ENCODE measurements at regions of chr1 and their contacts with region 1.

Region 1: GRCh38 chr1:89987170-89987819 is 7.6 kb upstream of the ZNF326 start:
- DNase-seq: peak in 8 of 9 experiments; percentile 16 to 81 (median 52)
- ATAC-seq: peak; percentile 95
- H3K4me3 ChIP-seq: no peak overlapping the region
- H3K4me3 Mint-ChIP-seq: no peak overlapping the region
- H3K27ac ChIP-seq: no peak overlapping the region
- H3K27ac Mint-ChIP-seq: no peak overlapping the region
- H3K4me1 ChIP-seq: no peaks in the 10 kb centered on the region
- H3K4me1 Mint-ChIP-seq: no peaks in the 10 kb centered on the region
- H3K27me3 ChIP-seq: no peaks in the 10 kb centered on the region
- H3K27me3 Mint-ChIP-seq: no peaks in the 10 kb centered on the region
- CTCF ChIP-seq: peak; percentile 84

Region 2: DNA sequence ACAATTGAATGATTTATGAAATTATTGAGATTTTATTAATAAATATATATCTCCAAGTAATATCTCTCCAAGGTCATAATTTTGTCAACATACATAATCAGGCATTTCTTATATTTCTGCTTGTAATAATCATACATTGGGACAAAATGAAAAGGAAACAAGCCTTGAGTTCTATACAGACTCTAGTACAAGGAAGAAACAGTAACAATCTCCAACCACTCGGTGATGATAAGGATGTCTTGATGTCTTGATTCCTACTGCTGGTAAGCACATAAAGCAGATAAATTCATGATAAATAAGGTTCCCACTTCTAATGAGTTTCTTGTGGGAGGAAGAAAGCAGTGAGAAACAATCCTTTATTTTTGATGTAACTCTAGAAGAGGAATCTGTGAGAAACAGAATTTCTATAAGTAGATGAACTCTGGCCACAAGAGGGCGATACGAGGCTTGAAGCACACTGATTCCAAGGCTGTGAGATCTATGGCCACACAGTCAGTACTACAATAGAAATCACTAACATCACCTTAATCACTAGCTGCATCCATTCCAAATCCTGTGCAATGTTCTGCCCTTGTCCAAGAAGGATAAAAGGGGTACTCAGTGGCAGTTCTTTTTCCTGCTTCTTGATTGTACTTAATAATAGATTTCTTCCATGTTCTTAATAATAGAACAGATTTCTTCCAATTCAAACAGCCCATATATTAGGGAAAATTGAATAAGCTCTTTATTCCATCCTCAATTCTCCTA is 504.1 kb before region 1 on chr1:
- CTCF ChIA-PET with region 1: interaction called, 5 read pairs
- POLR2A ChIA-PET with region 1: no interaction called
- intact Hi-C with region 1: loop called (anchors 1 to 2 kb)
- DNase-seq: peak; percentile 48 to 85 (median 79)
- ATAC-seq: peak; percentile 92
- H3K4me3 ChIP-seq: no peak overlapping the region
- H3K4me3 Mint-ChIP-seq: no peak overlapping the region
- H3K27ac ChIP-seq: no peak overlapping the region
- H3K27ac Mint-ChIP-seq: no peak overlapping the region
- H3K4me1 ChIP-seq: no peaks in the 10 kb centered on the region
- H3K4me1 Mint-ChIP-seq: peaks cover 9% of the 10 kb centered on the region
- H3K27me3 ChIP-seq: no peaks in the 10 kb centered on the region
- H3K27me3 Mint-ChIP-seq: peaks cover 4% of the 10 kb centered on the region
- CTCF ChIP-seq: peak; percentile 72

Region 3: DNA sequence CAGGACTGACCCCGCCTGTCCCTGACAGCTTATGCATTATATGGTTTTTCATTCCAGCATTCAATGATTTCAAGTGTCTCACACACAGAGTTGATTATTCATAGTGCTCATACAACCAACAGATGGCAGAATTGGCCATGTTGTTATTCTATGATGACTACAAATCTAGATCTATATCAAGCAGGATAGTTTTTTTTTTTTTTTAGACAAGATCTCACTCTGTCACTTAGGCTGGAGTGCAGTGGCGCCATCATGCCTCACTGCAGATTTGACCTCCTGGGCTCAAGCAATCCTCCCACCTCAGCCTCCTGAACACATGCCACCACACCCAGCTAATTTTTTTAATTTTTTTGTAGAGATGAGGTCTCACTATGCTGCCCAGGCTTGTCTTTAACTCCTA is 206.6 kb before region 1 on chr1:
- CTCF ChIA-PET with region 1: interaction called, 33 read pairs
- POLR2A ChIA-PET with region 1: no interaction called
- intact Hi-C with region 1: loop called (anchors 1 kb)
- DNase-seq: peak in 2 of 9 experiments; percentile 51 to 71
- ATAC-seq: peak; percentile 75
- H3K4me3 ChIP-seq: no peak overlapping the region
- H3K4me3 Mint-ChIP-seq: no peak overlapping the region
- H3K27ac ChIP-seq: no peak overlapping the region
- H3K27ac Mint-ChIP-seq: no peak overlapping the region
- H3K4me1 ChIP-seq: peaks cover 16% of the 10 kb centered on the region
- H3K4me1 Mint-ChIP-seq: peaks cover 21% of the 10 kb centered on the region
- H3K27me3 ChIP-seq: no peaks in the 10 kb centered on the region
- H3K27me3 Mint-ChIP-seq: no peaks in the 10 kb centered on the region
- CTCF ChIP-seq: peak; percentile 48

Region 4: DNA sequence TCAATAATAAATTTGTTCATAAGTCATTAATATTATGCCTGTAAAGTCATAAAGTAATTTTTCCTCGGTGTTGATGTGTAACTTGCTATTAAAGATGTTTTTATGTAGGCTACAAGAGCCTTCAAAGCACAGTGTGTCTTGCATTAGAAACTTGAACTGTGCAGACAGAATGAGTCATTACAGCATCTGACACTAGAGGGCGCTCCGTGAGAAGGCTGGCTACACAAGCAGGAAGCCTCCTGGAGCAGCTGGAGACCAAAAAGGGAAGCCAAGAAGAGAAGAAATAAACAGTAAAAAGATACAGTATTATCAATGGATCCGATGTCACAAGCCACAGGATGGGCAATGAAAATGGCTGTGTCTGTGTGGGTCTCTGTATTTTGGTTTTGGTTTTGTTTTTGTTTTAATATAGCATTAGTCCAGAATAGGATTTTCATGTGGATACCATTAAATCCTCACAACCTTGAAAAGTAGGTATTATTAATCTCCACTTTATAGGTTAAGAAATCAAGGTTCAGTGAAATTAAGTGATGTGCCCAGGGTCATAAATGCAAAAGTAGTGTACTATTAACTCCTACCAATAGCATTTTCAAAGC is 182.6 kb before region 1 on chr1:
- CTCF ChIA-PET with region 1: interaction called, 87 read pairs
- POLR2A ChIA-PET with region 1: no interaction called
- intact Hi-C with region 1: loop called (anchors 1 kb)
- DNase-seq: peak; percentile 68 to 91 (median 85)
- ATAC-seq: peak; percentile 93
- H3K4me3 ChIP-seq: no peak overlapping the region
- H3K4me3 Mint-ChIP-seq: no peak overlapping the region
- H3K27ac ChIP-seq: no peak overlapping the region
- H3K27ac Mint-ChIP-seq: no peak overlapping the region
- H3K4me1 ChIP-seq: no peaks in the 10 kb centered on the region
- H3K4me1 Mint-ChIP-seq: no peaks in the 10 kb centered on the region
- H3K27me3 ChIP-seq: no peaks in the 10 kb centered on the region
- H3K27me3 Mint-ChIP-seq: peaks cover 2% of the 10 kb centered on the region
- CTCF ChIP-seq: peak; percentile 91

Region 5: DNA sequence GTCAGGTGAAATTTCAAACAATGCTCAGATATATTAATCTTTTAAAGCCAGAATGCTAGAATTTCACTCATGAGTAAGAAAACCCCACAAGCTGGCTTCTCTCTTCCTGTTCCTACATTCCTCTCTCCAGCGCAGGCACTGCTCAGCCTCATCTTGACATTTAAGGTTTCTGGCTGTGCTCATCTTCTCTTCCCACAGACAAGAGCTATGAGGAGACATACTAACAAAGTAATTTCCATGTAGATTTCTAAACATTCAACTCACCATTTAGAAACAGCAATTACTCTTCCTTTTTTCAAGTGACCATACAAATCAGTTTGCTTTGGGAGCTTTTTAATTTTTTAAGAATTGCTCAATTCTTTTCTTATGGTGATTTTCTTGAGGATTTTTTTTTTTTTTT is 174.3 kb before region 1 on chr1:
- CTCF ChIA-PET with region 1: interaction called, 24 read pairs
- POLR2A ChIA-PET with region 1: no interaction called
- intact Hi-C with region 1: no loop called
- DNase-seq: no peak
- ATAC-seq: no peak
- H3K4me3 ChIP-seq: no peak overlapping the region
- H3K4me3 Mint-ChIP-seq: no peak overlapping the region
- H3K27ac ChIP-seq: no peak overlapping the region
- H3K27ac Mint-ChIP-seq: no peak overlapping the region
- H3K4me1 ChIP-seq: no peaks in the 10 kb centered on the region
- H3K4me1 Mint-ChIP-seq: peaks cover 6% of the 10 kb centered on the region
- H3K27me3 ChIP-seq: no peaks in the 10 kb centered on the region
- H3K27me3 Mint-ChIP-seq: peaks cover 7% of the 10 kb centered on the region
- CTCF ChIP-seq: no peak

Region 6: DNA sequence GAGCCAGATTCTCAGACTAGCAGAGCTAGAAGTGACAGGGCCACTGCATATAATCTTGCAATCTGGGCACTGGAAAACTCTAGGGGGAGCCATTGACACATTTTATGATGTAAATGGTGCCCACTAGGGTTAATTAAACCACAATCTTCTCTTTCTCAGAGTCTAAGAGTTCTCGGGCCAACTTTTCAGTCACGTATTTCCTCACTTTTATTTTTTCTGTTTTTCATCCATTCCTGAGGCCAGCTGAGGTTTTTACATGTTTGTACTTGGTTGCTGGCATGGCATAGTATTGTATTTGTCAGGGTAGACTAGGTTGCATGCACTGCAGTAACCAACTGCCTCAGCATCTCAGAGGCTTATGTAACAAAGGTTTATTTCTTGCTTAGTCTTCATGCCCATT is 145.8 kb after region 1 on chr1:
- CTCF ChIA-PET with region 1: no interaction called
- POLR2A ChIA-PET with region 1: no interaction called
- intact Hi-C with region 1: no loop called
- DNase-seq: no peak
- ATAC-seq: no peak
- H3K4me3 ChIP-seq: no peak overlapping the region
- H3K4me3 Mint-ChIP-seq: no peak overlapping the region
- H3K27ac ChIP-seq: no peak overlapping the region
- H3K27ac Mint-ChIP-seq: no peak overlapping the region
- H3K4me1 ChIP-seq: no peaks in the 10 kb centered on the region
- H3K4me1 Mint-ChIP-seq: no peaks in the 10 kb centered on the region
- H3K27me3 ChIP-seq: no peaks in the 10 kb centered on the region
- H3K27me3 Mint-ChIP-seq: peaks cover 22% of the 10 kb centered on the region
- CTCF ChIP-seq: no peak

Region 7: DNA sequence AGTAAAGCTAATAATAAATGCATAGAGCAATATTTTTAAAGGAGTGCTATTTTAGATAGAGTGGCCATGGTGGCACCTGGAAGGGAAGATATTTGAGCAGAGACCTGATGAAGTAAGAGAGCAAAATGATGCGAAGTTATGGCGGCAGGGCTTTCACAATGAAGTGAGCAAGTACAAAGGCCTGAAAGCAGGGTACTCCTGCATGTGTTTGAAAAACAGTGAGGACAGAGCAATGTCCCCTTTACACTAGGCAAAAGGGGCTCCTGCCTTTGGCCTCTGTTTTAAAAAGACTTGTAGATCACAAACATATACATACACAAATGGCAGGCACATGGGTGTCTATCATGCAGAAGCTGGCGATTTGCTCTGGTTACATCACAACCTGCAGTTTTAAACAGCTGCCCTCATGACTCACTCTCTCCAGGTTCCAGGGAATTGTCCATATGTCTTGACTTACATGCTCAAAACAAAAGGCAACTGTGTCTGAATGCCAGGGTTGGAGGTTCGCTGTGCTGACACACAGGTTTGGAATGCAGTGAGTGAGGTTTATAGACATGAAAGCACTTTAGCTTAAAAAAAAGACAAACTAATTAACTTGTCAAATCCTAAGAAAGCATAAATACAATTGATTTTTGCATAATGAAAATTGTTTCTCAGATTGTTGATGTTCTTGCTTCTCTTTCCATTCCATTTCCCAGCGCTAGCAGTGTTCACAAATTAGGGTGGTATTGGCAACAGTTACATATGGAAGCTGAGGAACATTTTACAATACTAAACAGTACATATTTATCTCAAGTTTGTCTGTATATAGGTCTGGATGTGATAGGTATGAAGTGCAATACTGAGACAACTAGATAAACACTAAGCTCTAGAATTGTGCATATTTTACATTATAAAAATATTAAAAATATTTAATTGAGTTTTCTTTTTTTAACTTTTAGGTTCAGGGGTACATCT is 415.9 kb after region 1 on chr1:
- CTCF ChIA-PET with region 1: no interaction called
- POLR2A ChIA-PET with region 1: no interaction called
- intact Hi-C with region 1: no loop called
- DNase-seq: no peak
- ATAC-seq: no peak
- H3K4me3 ChIP-seq: no peak overlapping the region
- H3K4me3 Mint-ChIP-seq: no peak overlapping the region
- H3K27ac ChIP-seq: no peak overlapping the region
- H3K27ac Mint-ChIP-seq: no peak overlapping the region
- H3K4me1 ChIP-seq: no peaks in the 10 kb centered on the region
- H3K4me1 Mint-ChIP-seq: no peaks in the 10 kb centered on the region
- H3K27me3 ChIP-seq: peaks cover 0 to 2% of the 10 kb centered on the region in 2 experiments
- H3K27me3 Mint-ChIP-seq: peaks cover 9% of the 10 kb centered on the region
- CTCF ChIP-seq: no peak

Measured in CD8-positive, alpha-beta T cell (primary cell).